CD8-positive, alpha-beta T cell (primary cell): ENCODE measurements at regions of chr21 and their contacts with region 1.

Region 1: DNA sequence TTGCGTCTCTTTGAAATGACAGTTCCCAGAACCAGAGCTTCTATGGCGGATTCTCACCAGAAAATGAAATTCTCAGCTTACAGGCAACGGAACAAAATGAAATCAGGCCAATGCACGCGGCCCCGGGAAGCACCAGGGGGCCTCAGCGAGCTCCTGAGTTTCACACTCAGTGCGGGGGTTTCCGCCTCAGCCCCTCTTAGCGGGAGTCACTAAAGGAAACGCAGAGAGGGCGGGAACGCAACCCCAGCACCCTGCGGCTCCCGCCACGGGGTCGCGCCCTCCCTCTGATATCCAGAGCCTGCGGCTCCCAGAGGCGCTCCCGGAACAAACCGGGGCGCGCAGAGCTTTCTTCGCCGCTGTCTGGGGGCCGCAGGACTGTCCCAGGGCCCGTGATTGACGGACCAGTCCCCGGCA is 7.9 kb upstream of the COL6A1 start:
- DNase-seq: peak; percentile 64 to 91 (median 85)
- ATAC-seq: peak; percentile 92
- H3K4me3 ChIP-seq: peak overlapping the region; percentile 64 to 87
- H3K4me3 Mint-ChIP-seq: peak overlapping the region; percentile 86
- H3K27ac ChIP-seq: peak overlapping the region in 1 of 2 experiments; percentile 40
- H3K27ac Mint-ChIP-seq: peak overlapping the region; percentile 74
- H3K4me1 ChIP-seq: peaks cover 27% of the 10 kb centered on the region
- H3K4me1 Mint-ChIP-seq: peaks cover 13% of the 10 kb centered on the region
- H3K27me3 ChIP-seq: peaks cover 0 to 36% of the 10 kb centered on the region in 2 experiments
- H3K27me3 Mint-ChIP-seq: peaks cover 19% of the 10 kb centered on the region
- CTCF ChIP-seq: peak; percentile 83

Region 2: DNA sequence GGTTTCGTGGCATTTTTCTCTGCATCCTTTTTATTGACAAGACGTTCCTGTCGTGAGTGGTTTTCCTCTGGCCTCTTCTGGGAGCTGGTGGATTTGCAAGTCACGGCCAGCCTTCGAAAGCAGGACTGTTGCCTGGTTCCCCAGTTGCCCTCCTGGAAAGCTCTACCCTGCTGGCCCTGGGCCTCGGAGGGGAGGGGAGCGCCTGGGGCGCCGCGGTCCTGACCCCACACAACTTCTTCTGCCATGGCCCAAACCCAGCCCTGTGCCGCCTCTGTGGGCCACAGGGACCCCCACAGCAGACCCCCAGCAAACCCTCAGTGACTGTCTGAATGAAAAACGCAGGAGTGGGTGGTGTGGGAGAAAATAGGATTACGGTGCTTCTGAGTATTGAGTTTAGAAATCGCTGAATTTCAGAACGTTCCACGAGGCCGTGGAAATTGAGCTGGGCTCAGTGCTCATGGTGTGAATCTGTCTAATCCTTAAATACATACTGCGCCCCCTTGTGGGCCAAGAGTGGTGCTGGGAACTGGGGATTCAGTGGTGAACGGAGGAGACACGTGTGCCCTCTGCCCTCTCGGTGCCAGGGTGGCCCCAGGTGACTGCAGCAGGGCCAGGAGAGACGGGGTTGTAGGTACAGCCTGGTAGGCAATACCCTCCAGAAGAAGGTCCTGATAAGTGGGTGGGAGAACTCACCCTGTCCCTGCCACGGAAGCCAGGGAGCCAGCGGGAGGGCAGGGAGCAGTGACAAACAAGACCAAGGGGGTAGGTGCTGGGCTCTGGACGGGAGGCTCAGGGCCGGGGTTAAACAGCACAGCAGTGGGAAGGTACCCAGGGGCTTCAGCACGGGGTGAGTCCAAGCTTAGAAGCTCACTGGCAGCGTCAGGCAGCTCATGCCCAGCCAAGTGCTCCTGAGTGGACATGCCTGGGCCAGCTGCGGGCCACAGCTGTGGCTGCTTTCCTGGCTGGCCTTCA is 93.3 kb before region 1 on chr21:
- CTCF ChIA-PET with region 1: no interaction called
- POLR2A ChIA-PET with region 1: no interaction called
- intact Hi-C with region 1: no loop called
- DNase-seq: peak; percentile 38 to 79 (median 71)
- ATAC-seq: peak; percentile 86
- H3K4me3 ChIP-seq: no peak overlapping the region
- H3K4me3 Mint-ChIP-seq: peak overlapping the region; percentile 13
- H3K27ac ChIP-seq: no peak overlapping the region
- H3K27ac Mint-ChIP-seq: peak overlapping the region; percentile 76
- H3K4me1 ChIP-seq: peaks cover 29% of the 10 kb centered on the region
- H3K4me1 Mint-ChIP-seq: peaks cover 48% of the 10 kb centered on the region
- H3K27me3 ChIP-seq: peaks cover 0 to 4% of the 10 kb centered on the region in 2 experiments
- H3K27me3 Mint-ChIP-seq: peaks cover 4% of the 10 kb centered on the region
- CTCF ChIP-seq: peak; percentile 73

Region 3: DNA sequence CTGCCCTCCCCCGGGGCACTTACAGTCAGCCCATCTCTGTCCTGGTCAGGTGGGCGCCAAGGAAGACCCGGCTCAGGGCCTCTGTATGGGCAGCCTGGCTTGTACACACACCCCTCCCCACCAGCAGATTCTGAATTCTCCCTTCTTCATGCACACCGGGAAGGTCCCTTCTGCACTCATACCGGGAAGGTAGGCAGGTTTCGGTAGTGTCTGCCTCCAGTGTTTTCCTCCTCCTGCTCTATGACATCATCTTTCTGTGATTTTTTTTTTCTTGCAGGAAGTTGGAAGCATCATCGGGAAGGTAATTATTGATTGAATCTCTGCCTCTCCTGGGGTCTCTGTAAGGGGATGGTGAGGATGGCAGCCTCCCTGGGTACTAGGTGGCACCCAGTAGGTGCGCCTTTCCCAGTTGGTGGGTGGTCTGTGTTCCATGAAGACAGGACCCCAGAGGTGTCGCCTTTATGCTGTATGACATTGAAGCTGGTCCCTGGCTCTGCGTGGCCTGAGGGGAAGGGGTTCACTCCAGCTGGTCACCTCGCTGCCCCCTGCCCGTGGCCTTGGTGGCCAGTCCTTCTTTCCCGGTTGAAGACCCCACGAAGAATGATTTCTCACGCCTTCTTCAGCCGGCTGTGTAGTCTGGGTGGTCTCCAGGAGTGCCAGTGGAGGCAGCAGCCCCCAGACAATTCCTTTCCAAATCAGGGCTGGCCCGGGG is 74.2 kb before region 1 on chr21:
- CTCF ChIA-PET with region 1: no interaction called
- POLR2A ChIA-PET with region 1: no interaction called
- intact Hi-C with region 1: no loop called
- DNase-seq: no peak
- ATAC-seq: no peak
- H3K4me3 ChIP-seq: no peak overlapping the region
- H3K4me3 Mint-ChIP-seq: no peak overlapping the region
- H3K27ac ChIP-seq: no peak overlapping the region
- H3K27ac Mint-ChIP-seq: no peak overlapping the region
- H3K4me1 ChIP-seq: no peaks in the 10 kb centered on the region
- H3K4me1 Mint-ChIP-seq: peaks cover 1% of the 10 kb centered on the region
- H3K27me3 ChIP-seq: no peaks in the 10 kb centered on the region
- H3K27me3 Mint-ChIP-seq: no peaks in the 10 kb centered on the region
- CTCF ChIP-seq: no peak

Region 4: GRCh38 chr21:45910543-45911221 is 63.0 kb before region 1 on chr21:
- CTCF ChIA-PET with region 1: no interaction called
- POLR2A ChIA-PET with region 1: no interaction called
- intact Hi-C with region 1: no loop called
- DNase-seq: no peak
- ATAC-seq: no peak
- H3K4me3 ChIP-seq: no peak overlapping the region
- H3K4me3 Mint-ChIP-seq: no peak overlapping the region
- H3K27ac ChIP-seq: no peak overlapping the region
- H3K27ac Mint-ChIP-seq: no peak overlapping the region
- H3K4me1 ChIP-seq: peaks cover 3% of the 10 kb centered on the region
- H3K4me1 Mint-ChIP-seq: peaks cover 7% of the 10 kb centered on the region
- H3K27me3 ChIP-seq: no peaks in the 10 kb centered on the region
- H3K27me3 Mint-ChIP-seq: no peaks in the 10 kb centered on the region
- CTCF ChIP-seq: no peak

Region 5: DNA sequence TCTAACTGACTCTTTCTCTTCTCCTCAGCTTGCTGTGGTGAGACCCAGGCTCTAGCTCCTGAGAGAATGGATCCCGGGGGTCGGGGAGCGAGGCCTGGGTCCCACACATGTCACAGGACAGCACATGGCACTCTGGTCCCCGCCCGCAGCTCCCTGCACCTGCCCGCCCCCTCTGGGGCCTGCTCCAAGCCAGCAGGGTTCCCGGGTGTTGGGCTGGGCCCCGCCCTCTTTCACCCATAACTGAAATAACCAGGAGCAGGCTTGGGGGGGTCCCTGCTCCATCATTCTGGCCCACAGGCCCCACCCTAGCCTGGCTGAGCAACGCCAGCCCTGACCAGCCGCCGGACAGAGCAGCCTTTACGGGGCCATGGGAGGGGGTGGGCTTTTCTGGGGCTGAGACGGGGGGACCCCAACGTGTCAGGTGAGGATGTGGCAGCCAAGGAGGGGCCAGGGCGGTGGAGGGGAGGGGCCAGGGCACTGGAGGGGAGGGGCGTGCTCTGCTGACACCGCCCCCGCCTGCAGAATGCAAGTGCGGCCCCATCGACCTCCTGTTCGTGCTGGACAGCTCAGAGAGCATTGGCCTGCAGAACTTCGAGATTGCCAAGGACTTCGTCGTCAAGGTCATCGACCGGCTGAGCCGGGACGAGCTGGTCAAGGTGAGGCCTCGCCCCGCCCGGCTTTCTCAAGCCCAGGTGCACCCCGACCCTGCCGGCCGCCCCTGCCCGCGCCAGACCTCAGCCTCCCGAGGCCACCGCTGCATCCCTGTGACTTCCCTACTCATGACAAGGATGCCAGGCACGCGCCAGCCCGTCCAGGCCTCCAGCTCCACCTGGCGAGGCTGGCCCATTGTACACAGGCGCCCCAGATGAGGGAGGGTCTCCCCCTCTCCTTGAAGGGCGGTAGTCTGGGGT is 27.3 kb after region 1 on chr21:
- CTCF ChIA-PET with region 1: no interaction called
- POLR2A ChIA-PET with region 1: no interaction called
- intact Hi-C with region 1: no loop called
- DNase-seq: peak in 5 of 9 experiments; percentile 2 to 36 (median 5)
- ATAC-seq: no peak
- H3K4me3 ChIP-seq: no peak overlapping the region
- H3K4me3 Mint-ChIP-seq: no peak overlapping the region
- H3K27ac ChIP-seq: no peak overlapping the region
- H3K27ac Mint-ChIP-seq: no peak overlapping the region
- H3K4me1 ChIP-seq: no peaks in the 10 kb centered on the region
- H3K4me1 Mint-ChIP-seq: no peaks in the 10 kb centered on the region
- H3K27me3 ChIP-seq: no peaks in the 10 kb centered on the region
- H3K27me3 Mint-ChIP-seq: no peaks in the 10 kb centered on the region
- CTCF ChIP-seq: no peak

Region 6: GRCh38 chr21:46097336-46098293 is 123.9 kb after region 1 on chr21 and contains the start of gene COL6A2:
- CTCF ChIA-PET with region 1: interaction called, 4 read pairs
- POLR2A ChIA-PET with region 1: no interaction called
- intact Hi-C with region 1: loop called (anchors 1 to 2 kb)
- DNase-seq: peak; percentile 19 to 76 (median 57)
- ATAC-seq: peak; percentile 83
- H3K4me3 ChIP-seq: peak within 1 kb of the TSS; percentile 41
- H3K4me3 Mint-ChIP-seq: peak within 1 kb of the TSS; percentile 74
- H3K27ac ChIP-seq: no peak within 1 kb of the TSS
- H3K27ac Mint-ChIP-seq: no peak within 1 kb of the TSS
- H3K4me1 ChIP-seq: peaks cover 10% of the 10 kb centered on the region
- H3K4me1 Mint-ChIP-seq: peaks cover 22% of the 10 kb centered on the region
- H3K27me3 ChIP-seq: peaks cover 0 to 8% of the 10 kb centered on the region in 2 experiments
- H3K27me3 Mint-ChIP-seq: peaks cover 14% of the 10 kb centered on the region
- CTCF ChIP-seq: no peak
- total RNA-seq, gene COL6A2: 74.4 to 80.6 TPM

Region 7: DNA sequence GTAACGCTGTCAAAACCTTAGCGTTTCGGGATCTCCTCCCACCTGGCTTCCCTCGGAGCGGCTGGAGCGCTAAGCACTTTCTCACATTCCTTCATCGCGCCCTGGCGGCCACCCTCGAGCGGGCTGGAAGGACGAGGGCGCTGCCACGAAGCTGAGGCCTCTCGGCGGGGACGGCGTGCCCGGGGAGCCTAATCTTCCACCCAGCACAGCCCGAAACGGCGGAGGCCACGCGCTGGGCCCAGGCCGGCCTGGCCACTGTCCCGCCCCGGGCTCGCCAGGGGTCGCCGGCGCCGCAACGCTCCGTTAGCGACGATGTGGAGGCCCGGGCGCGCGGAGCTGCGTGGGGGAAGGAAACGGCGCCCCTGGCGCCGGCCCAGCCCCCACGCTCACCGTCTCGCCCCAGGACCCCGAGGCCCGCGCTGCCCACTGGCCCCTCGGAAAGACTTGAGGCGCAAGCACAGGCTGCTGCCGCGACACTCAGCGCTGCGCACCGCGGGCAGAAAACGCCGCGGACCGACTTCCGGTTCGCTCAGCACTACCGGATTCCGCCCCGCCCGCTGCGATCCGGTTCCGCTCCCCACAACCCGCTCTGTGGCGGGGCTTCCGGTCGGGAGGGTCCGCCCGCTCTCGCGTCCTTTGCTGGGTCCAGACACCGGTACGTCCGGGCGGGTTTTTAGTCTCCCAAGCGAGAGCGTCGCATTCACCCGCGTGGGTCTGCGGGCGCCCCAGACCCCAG is 312.3 kb after region 1 on chr21 and contains the start of gene YBEY:
- CTCF ChIA-PET with region 1: no interaction called
- POLR2A ChIA-PET with region 1: no interaction called
- intact Hi-C with region 1: loop called (anchors 2 to 10 kb)
- DNase-seq: peak; percentile 59 to 93 (median 84)
- ATAC-seq: peak; percentile 79
- H3K4me3 ChIP-seq: peak within 1 kb of the TSS; percentile 85 to 88
- H3K4me3 Mint-ChIP-seq: peak within 1 kb of the TSS; percentile 90
- H3K27ac ChIP-seq: peak within 1 kb of the TSS; percentile 72 to 86
- H3K27ac Mint-ChIP-seq: peak within 1 kb of the TSS; percentile 94
- H3K4me1 ChIP-seq: peaks cover 38% of the 10 kb centered on the region
- H3K4me1 Mint-ChIP-seq: peaks cover 61% of the 10 kb centered on the region
- H3K27me3 ChIP-seq: no peaks in the 10 kb centered on the region
- H3K27me3 Mint-ChIP-seq: no peaks in the 10 kb centered on the region
- CTCF ChIP-seq: peak; percentile 43
- total RNA-seq, gene YBEY: 10.8 to 13.6 TPM